GM12878 (cell line): ENCODE measurements at regions of chr6 and their contacts with region 1.

Region 1: GRCh38 chr6:16420715-16421461 is 182.5 kb downstream of the GMPR start:
- DNase-seq: peak; percentile 97
- ATAC-seq: peak; percentile 68
- H3K4me3 ChIP-seq: no peak overlapping the region
- H3K27ac ChIP-seq: peak overlapping the region; percentile 98
- H3K4me1 ChIP-seq: peaks cover 36% of the 10 kb centered on the region
- H3K27me3 ChIP-seq: no peaks in the 10 kb centered on the region
- CTCF ChIP-seq: no peak
- EP300 ChIP-seq: peak; percentile 91; a peak in 3 of 4 replicates
- POLR2A ChIP-seq: peak; percentile 48; the same call in 1 of the 2 replicates
- RAD21 ChIP-seq: 0 out of 2 replicates have a peak, but pooled peaks have one; percentile 18

Region 2: GRCh38 chr6:16319813-16320532 is 100.9 kb before region 1 on chr6:
- CTCF ChIA-PET with region 1: no interaction called
- POLR2A ChIA-PET with region 1: no interaction called
- RAD21 ChIA-PET with region 1: interaction called, 11 read pairs
- SMC1A ChIA-PET with region 1: no interaction called
- in situ Hi-C with region 1: no loop called
- intact Hi-C with region 1: no loop called
- DNase-seq: peak; percentile 59
- ATAC-seq: peak; percentile 90
- H3K4me3 ChIP-seq: peak overlapping the region; percentile 43
- H3K27ac ChIP-seq: peak overlapping the region; percentile 56
- H3K4me1 ChIP-seq: peaks cover 31% of the 10 kb centered on the region
- H3K27me3 ChIP-seq: no peaks in the 10 kb centered on the region
- CTCF ChIP-seq: no peak
- EP300 ChIP-seq: 0 out of 4 replicates have a peak, but pooled peaks of 1 of the 2 experiments have one; percentile 9
- POLR2A ChIP-seq: 0 out of 2 replicates have a peak, but pooled peaks have one; percentile 26
- RAD21 ChIP-seq: no peak

Region 3: GRCh38 chr6:16409531-16410441 is 11.1 kb before region 1 on chr6:
- CTCF ChIA-PET with region 1: interaction called, 9 read pairs
- POLR2A ChIA-PET with region 1: interaction called, 6 read pairs
- RAD21 ChIA-PET with region 1: interaction called, 17 read pairs
- SMC1A ChIA-PET with region 1: interaction called, 28 read pairs
- in situ Hi-C with region 1: no loop called
- intact Hi-C with region 1: no loop called
- DNase-seq: no peak
- ATAC-seq: peak; percentile 40
- H3K4me3 ChIP-seq: no peak overlapping the region
- H3K27ac ChIP-seq: no peak overlapping the region
- H3K4me1 ChIP-seq: peaks cover 11% of the 10 kb centered on the region
- H3K27me3 ChIP-seq: no peaks in the 10 kb centered on the region
- CTCF ChIP-seq: peak; percentile 60 to 86 (median 83)
- EP300 ChIP-seq: no peak
- POLR2A ChIP-seq: no peak
- RAD21 ChIP-seq: peak; percentile 79

Region 4: GRCh38 chr6:16438718-16439591 is 18.1 kb after region 1 on chr6:
- CTCF ChIA-PET with region 1: interaction called, 18 read pairs
- POLR2A ChIA-PET with region 1: interaction called, 10 read pairs
- RAD21 ChIA-PET with region 1: interaction called, 99 read pairs
- SMC1A ChIA-PET with region 1: interaction called, 43 read pairs
- in situ Hi-C with region 1: no loop called
- intact Hi-C with region 1: no loop called
- DNase-seq: peak; percentile 53
- ATAC-seq: peak; percentile 78
- H3K4me3 ChIP-seq: no peak overlapping the region
- H3K27ac ChIP-seq: peak overlapping the region; percentile 70
- H3K4me1 ChIP-seq: peaks cover 41% of the 10 kb centered on the region
- H3K27me3 ChIP-seq: no peaks in the 10 kb centered on the region
- CTCF ChIP-seq: no peak
- EP300 ChIP-seq: no peak
- POLR2A ChIP-seq: no peak
- RAD21 ChIP-seq: no peak

Region 5: GRCh38 chr6:16481697-16482399 is 61.0 kb after region 1 on chr6:
- CTCF ChIA-PET with region 1: interaction called, 20 read pairs
- POLR2A ChIA-PET with region 1: interaction called, 134 read pairs
- RAD21 ChIA-PET with region 1: interaction called, 215 read pairs
- SMC1A ChIA-PET with region 1: interaction called, 338 read pairs
- in situ Hi-C with region 1: no loop called
- intact Hi-C with region 1: no loop called
- DNase-seq: no peak
- ATAC-seq: peak; percentile 61
- H3K4me3 ChIP-seq: peak overlapping the region; percentile 20; the same call in 1 of the 2 replicates
- H3K27ac ChIP-seq: peak overlapping the region; percentile 83
- H3K4me1 ChIP-seq: peaks cover 65% of the 10 kb centered on the region
- H3K27me3 ChIP-seq: no peaks in the 10 kb centered on the region
- CTCF ChIP-seq: no peak
- EP300 ChIP-seq: peak; percentile 68 to 77; a peak in 3 of 4 replicates
- POLR2A ChIP-seq: no peak
- RAD21 ChIP-seq: peak; percentile 3; the same call in 1 of the 2 replicates

Region 6: GRCh38 chr6:16503970-16504415 is 83.1 kb after region 1 on chr6:
- CTCF ChIA-PET with region 1: interaction called, 7 read pairs
- POLR2A ChIA-PET with region 1: interaction called, 9 read pairs
- RAD21 ChIA-PET with region 1: interaction called, 47 read pairs
- SMC1A ChIA-PET with region 1: interaction called, 20 read pairs
- in situ Hi-C with region 1: no loop called
- intact Hi-C with region 1: no loop called
- DNase-seq: peak; percentile 92
- ATAC-seq: peak; percentile 85
- H3K4me3 ChIP-seq: no peak overlapping the region; the same call in 1 of the 2 replicates
- H3K27ac ChIP-seq: peak overlapping the region; percentile 70
- H3K4me1 ChIP-seq: peaks cover 50% of the 10 kb centered on the region
- H3K27me3 ChIP-seq: no peaks in the 10 kb centered on the region
- CTCF ChIP-seq: no peak
- EP300 ChIP-seq: peak; percentile 85 to 90
- POLR2A ChIP-seq: no peak
- RAD21 ChIP-seq: no peak

Region 7: DNA sequence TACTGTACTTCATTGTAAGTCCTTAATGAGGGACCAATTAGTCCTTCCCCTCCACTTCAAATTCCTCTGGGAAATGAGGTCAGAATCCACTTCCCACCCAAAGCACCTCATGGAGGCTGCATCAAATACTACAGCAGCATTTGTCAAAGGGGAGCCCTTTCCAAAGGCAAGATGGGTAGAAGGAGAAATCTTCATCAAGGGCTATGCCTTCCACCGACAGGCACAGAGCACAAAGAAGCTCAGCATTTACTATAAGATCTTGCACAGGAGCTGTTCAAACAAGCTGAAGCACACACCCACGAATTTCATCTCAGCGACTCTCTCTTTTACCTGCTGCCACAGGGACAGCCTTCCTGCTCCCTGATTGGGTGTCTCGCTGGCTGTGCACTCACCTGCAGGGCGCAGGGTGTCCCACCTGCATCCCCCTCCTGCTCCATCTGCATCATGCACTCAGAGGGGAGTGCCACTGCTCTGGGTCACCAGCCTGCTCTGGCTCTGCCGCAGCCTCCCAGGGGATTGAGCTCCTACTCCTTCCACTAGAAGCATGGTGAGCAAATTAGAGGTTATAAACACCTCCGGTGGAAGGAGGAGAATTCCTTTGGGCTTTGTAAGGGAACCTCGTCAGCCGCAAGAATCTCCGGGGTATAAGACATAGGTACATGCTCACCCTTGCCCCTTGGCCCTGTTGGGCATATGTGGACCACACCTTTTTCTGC is 175.9 kb after region 1 on chr6:
- CTCF ChIA-PET with region 1: interaction called, 5 read pairs
- POLR2A ChIA-PET with region 1: interaction called, 5 read pairs
- RAD21 ChIA-PET with region 1: interaction called, 9 read pairs
- SMC1A ChIA-PET with region 1: interaction called, 13 read pairs
- in situ Hi-C with region 1: loop called (anchors 5 kb)
- intact Hi-C with region 1: loop called (anchors 1 kb)
- DNase-seq: no peak
- ATAC-seq: no peak
- H3K4me3 ChIP-seq: no peak overlapping the region
- H3K27ac ChIP-seq: no peak overlapping the region
- H3K4me1 ChIP-seq: peaks cover 27% of the 10 kb centered on the region
- H3K27me3 ChIP-seq: no peaks in the 10 kb centered on the region
- CTCF ChIP-seq: no peak
- EP300 ChIP-seq: no peak
- POLR2A ChIP-seq: no peak
- RAD21 ChIP-seq: no peak

Region 8: GRCh38 chr6:16857969-16858592 is 437.2 kb after region 1 on chr6:
- CTCF ChIA-PET with region 1: no interaction called
- POLR2A ChIA-PET with region 1: no interaction called
- RAD21 ChIA-PET with region 1: no interaction called
- SMC1A ChIA-PET with region 1: no interaction called
- in situ Hi-C with region 1: no loop called
- intact Hi-C with region 1: no loop called
- DNase-seq: no peak
- ATAC-seq: no peak
- H3K4me3 ChIP-seq: no peak overlapping the region
- H3K27ac ChIP-seq: no peak overlapping the region
- H3K4me1 ChIP-seq: peaks cover 16% of the 10 kb centered on the region
- H3K27me3 ChIP-seq: no peaks in the 10 kb centered on the region
- CTCF ChIP-seq: no peak
- EP300 ChIP-seq: no peak
- POLR2A ChIP-seq: no peak
- RAD21 ChIP-seq: no peak